ENCODE measurements at regions of chr9 and their contacts with region 1.

Region 1: DNA sequence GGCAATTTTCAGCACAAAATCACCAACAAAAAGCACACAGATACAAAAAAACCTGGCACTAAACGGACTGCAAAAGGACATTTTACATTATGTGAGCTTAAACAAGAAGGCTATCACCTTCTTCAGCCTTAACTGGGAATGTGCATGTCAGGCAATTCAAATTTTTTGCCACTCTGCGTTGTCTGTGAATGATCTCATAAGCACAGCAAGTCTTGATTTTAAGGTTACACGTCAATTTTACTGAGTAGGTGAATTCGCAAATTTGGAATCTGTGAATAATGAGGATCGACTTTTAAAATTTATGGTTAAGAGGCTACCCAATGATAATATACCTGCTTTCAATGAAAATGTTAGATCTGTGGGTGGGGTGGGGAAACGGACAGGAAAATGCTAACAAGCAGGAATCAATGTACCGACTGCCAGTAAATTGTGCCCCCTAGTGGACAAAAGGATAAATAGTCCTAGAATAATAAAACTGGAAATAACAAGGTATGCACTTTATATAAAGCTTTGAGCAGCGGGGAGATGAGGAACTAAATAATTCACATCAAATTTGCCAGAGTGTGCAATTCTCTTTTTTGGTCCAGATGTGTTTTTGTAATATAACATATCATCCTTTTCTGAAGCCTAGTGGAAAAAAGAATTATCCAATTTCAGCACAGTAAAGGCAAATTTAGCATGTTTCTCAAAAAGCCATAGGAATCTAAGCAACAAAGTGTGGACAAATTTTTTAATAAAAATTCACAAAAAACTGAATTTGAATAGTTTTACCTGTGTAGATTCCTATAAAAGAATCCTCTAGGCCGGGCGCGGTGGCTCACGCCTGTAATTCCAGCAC is 20.5 kb downstream of the EQTN start:
- DNase-seq: peak; percentile 26
- H3K4me3 ChIP-seq: no peak overlapping the region
- H3K27ac ChIP-seq: no peak overlapping the region
- H3K4me1 ChIP-seq: no peaks in the 10 kb centered on the region
- H3K27me3 ChIP-seq: no peaks in the 10 kb centered on the region
- CTCF ChIP-seq: peak; percentile 69 to 88 (median 74)
- POLR2A ChIP-seq: no peak

Region 2: DNA sequence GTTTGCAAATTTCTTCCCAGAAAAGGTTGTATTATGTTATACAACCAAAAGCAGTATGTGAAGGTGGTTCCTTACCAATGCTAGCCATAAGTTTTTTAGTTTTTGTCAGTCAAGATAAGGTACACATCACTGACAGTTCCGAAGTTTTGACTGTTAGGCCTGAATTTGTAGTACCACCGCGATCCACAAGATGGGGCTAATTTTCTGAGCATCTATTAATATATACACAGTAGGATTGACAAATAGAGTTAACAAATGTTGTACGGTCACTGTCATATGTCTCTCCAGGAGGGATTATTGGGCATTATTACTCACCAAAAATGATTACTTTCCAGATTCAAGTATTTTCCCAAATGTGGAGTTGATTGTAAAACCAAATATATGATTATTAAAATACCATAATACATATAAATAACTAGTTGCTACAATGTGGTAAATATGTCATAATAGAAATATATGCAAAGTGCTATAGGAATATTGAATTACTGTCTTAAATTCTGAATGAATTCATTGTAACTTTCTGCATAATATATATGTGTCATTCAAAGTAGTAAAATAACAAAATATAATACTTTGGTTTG is 242.5 kb before region 1 on chr9:
- intact Hi-C with region 1: loop called (anchors 5 kb)
- DNase-seq: peak; percentile 39
- H3K4me3 ChIP-seq: no peak overlapping the region
- H3K27ac ChIP-seq: no peak overlapping the region
- H3K4me1 ChIP-seq: no peaks in the 10 kb centered on the region
- H3K27me3 ChIP-seq: no peaks in the 10 kb centered on the region
- CTCF ChIP-seq: peak; percentile 52 to 73 (median 66)
- POLR2A ChIP-seq: no peak

Region 3: GRCh38 chr9:27125030-27125429 is 151.4 kb before region 1 on chr9:
- intact Hi-C with region 1: no loop called
- DNase-seq: peak; percentile 5
- H3K4me3 ChIP-seq: no peak overlapping the region
- H3K27ac ChIP-seq: no peak overlapping the region
- H3K4me1 ChIP-seq: no peaks in the 10 kb centered on the region
- H3K27me3 ChIP-seq: no peaks in the 10 kb centered on the region
- CTCF ChIP-seq: no peak
- POLR2A ChIP-seq: no peak

Measured in prostate gland (tissue), 2 donors.